PC-9 (cell line): ENCODE measurements at regions of chr10 and their contacts with region 1.

Region 1: DNA sequence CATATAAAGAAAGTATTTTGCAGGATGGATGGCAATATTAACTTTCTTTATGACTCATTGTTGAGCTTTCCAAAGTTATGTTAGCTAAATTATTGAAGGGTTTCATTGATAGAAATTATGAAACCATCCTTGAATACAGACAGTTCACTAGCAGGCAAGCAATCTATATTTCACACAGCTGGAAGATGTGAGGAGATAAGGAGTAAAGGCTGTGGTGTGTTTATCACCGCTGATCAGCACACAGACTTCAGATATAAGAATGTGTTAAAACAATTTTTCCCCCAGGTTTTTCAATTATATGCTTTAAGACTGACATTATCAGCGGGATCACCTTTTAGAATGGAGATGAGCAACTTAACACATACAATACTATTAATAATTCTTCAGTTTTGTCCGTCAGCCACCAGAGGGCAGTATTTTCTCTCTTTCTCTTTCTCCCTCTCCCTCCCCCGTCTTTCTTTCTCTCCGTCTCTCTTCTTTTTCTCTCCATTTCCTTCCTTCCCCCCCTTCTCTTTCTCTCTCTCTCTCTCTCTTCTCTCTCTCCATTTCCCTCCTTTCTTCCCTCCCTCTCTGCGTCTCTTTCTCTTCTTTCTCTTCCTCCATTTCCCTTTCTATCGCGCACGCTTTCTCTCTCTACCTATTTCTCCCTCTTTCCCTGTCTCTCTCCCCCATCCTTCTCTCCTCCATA is 62.9 kb upstream of the FAM171A1 start:
- DNase-seq: no peak
- H3K4me3 ChIP-seq: no peak overlapping the region
- H3K27ac ChIP-seq: no peak overlapping the region
- H3K4me1 ChIP-seq: no peaks in the 10 kb centered on the region
- H3K27me3 ChIP-seq: no peaks in the 10 kb centered on the region
- CTCF ChIP-seq: peak; percentile 69

Region 2: DNA sequence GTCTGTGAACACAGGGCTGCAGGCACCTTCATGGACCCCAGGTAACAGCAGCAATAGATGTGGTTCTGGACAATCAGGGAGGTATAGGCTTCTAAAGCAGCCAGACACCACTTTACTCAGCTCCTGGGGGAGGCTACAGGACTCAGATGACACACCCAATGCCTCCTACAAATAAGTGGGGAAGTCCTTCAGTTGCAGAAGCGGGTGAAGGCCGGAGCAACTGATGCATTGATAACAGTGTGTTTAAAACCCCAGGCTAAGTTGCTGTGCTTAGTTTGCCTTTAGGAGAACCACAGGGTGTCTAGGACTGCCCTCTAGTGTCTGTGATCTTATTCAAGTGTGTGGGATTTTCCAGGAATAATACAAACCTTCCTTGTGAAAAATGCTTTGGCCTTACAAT is 291.6 kb after region 1 on chr10:
- CTCF ChIA-PET with region 1: no interaction called
- POLR2A ChIA-PET with region 1: no interaction called
- intact Hi-C with region 1: loop called (anchors 10 kb)
- DNase-seq: no peak
- H3K4me3 ChIP-seq: no peak overlapping the region
- H3K27ac ChIP-seq: no peak overlapping the region
- H3K4me1 ChIP-seq: no peaks in the 10 kb centered on the region
- H3K27me3 ChIP-seq: peaks cover 25% of the 10 kb centered on the region; the same call in 1 of the 2 replicates
- CTCF ChIP-seq: peak; percentile 56

Region 3: GRCh38 chr10:15824498-15824897 is 390.5 kb after region 1 on chr10:
- CTCF ChIA-PET with region 1: no interaction called
- POLR2A ChIA-PET with region 1: no interaction called
- intact Hi-C with region 1: loop called (anchors 5 kb)
- DNase-seq: no peak
- H3K4me3 ChIP-seq: no peak overlapping the region
- H3K27ac ChIP-seq: no peak overlapping the region
- H3K4me1 ChIP-seq: no peaks in the 10 kb centered on the region
- H3K27me3 ChIP-seq: no peaks in the 10 kb centered on the region
- CTCF ChIP-seq: peak; percentile 64